ENCODE measurements at regions of chr15 and their contacts with region 1.

Region 1: GRCh38 chr15:84929744-84930371 is 45.4 kb downstream of the SLC28A1 start:
- DNase-seq: no peak
- ATAC-seq: no peak
- H3K4me3 Mint-ChIP-seq: no peak overlapping the region
- H3K27ac Mint-ChIP-seq: no peak overlapping the region
- H3K4me1 Mint-ChIP-seq: peaks cover 7% of the 10 kb centered on the region
- H3K27me3 Mint-ChIP-seq: no peaks in the 10 kb centered on the region
- CTCF ChIP-seq: no peak

Region 2: DNA sequence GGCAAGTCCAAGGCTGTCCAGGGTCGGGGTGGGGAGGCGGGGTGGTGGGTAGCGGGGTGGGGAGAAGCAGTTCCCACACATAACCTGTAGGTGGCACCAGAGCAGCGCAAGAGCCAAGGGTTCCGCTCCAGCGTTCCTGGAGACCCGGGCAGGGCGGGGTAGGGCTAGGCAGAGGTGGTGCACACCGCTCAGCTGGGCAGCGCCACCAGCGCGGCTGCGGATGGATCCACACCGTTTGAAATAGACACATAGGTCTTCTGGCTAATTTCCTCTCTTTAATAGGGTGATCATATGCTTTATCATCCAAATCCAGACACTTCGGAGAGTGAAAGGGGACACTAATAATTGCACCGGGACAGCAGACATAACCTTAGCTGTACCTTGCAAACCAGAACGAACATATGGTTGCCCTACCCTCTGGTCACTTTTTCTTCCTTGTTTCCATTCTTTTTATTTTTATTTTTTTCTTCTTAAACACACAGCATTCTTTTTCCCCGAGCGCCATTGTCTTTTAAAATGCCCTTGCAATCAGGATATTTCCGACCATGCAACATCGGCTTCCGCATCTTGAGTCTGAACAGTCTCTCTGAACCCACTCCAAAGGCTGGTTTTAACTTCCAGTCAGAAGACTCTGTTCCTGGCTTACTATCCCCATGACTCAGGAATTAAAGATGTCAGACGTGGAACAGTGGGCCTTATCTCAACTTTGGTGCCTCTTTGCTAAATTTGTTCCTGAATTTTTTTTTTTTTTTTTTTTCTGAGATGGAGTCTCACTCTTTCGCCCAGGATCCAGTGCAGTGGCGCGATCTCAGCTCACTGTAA is 341.6 kb before region 1 on chr15:
- CTCF ChIA-PET with region 1: interaction called, 15 read pairs
- POLR2A ChIA-PET with region 1: interaction called, 3 read pairs
- DNase-seq: peak; percentile 94
- ATAC-seq: peak; percentile 99
- H3K4me3 Mint-ChIP-seq: peak overlapping the region; percentile 66
- H3K27ac Mint-ChIP-seq: no peak overlapping the region
- H3K4me1 Mint-ChIP-seq: peaks cover 22% of the 10 kb centered on the region
- H3K27me3 Mint-ChIP-seq: peaks cover 19% of the 10 kb centered on the region
- CTCF ChIP-seq: peak; percentile 93

Region 3: GRCh38 chr15:84844964-84845363 is 84.9 kb before region 1 on chr15:
- CTCF ChIA-PET with region 1: interaction called, 11 read pairs
- POLR2A ChIA-PET with region 1: no interaction called
- DNase-seq: no peak
- ATAC-seq: no peak
- H3K4me3 Mint-ChIP-seq: no peak overlapping the region
- H3K27ac Mint-ChIP-seq: no peak overlapping the region
- H3K4me1 Mint-ChIP-seq: no peaks in the 10 kb centered on the region
- H3K27me3 Mint-ChIP-seq: no peaks in the 10 kb centered on the region
- CTCF ChIP-seq: no peak

Region 4: DNA sequence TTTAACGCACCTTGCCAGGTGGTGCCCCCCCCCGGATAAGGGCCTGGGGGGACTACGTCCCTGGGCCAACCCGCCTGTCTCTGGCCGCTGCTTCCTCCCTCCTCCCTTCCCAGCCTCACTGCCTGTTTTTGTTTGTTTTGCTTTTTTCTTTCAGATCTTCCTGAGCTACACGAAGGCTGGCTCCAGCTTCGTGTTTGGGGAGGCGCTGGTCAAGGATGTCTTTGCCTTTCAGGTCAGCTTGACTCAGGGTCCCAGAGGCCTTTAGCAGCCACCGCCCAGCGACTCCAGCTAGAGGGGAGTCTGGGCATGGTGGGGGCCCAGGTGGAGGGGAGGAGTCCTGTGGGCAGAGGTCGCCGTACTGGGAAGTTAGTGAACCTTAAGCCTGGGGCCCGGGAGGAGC is 21.3 kb before region 1 on chr15:
- CTCF ChIA-PET with region 1: interaction called, 10 read pairs
- POLR2A ChIA-PET with region 1: interaction called, 3 read pairs
- DNase-seq: no peak
- ATAC-seq: peak; percentile 64
- H3K4me3 Mint-ChIP-seq: no peak overlapping the region
- H3K27ac Mint-ChIP-seq: no peak overlapping the region
- H3K4me1 Mint-ChIP-seq: peaks cover 8% of the 10 kb centered on the region
- H3K27me3 Mint-ChIP-seq: no peaks in the 10 kb centered on the region
- CTCF ChIP-seq: no peak

Region 5: GRCh38 chr15:84967380-84967779 is 37.5 kb after region 1 on chr15:
- CTCF ChIA-PET with region 1: no interaction called
- POLR2A ChIA-PET with region 1: no interaction called
- DNase-seq: no peak
- ATAC-seq: no peak; the same call in 1 of the 2 replicates
- H3K4me3 Mint-ChIP-seq: no peak overlapping the region
- H3K27ac Mint-ChIP-seq: no peak overlapping the region
- H3K4me1 Mint-ChIP-seq: peaks cover 12% of the 10 kb centered on the region
- H3K27me3 Mint-ChIP-seq: peaks cover 6% of the 10 kb centered on the region
- CTCF ChIP-seq: no peak

Region 6: DNA sequence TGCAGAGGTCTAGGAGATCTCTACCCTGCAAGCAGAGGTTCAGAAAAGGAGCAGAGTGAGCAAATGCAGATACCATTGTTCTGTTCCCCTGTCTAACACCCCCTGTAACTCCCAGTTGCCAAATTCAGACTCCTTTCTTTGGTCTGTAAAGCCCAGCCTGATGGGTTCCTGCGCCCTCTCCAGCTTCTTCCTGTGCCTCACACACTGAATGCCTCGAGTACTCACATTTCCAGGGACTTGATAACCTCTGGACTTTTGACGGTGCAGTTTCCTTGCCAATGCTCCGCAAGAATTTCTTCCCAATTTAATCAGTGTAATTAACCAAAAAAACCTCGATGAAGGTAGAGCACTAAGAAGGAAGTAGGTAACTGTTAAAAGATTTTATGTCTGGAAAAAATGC is 71.1 kb after region 1 on chr15:
- CTCF ChIA-PET with region 1: no interaction called
- POLR2A ChIA-PET with region 1: no interaction called
- DNase-seq: no peak
- ATAC-seq: no peak
- H3K4me3 Mint-ChIP-seq: no peak overlapping the region
- H3K27ac Mint-ChIP-seq: no peak overlapping the region
- H3K4me1 Mint-ChIP-seq: peaks cover 7% of the 10 kb centered on the region; the same call in 1 of the 2 replicates
- H3K27me3 Mint-ChIP-seq: no peaks in the 10 kb centered on the region
- CTCF ChIP-seq: no peak

Region 7: DNA sequence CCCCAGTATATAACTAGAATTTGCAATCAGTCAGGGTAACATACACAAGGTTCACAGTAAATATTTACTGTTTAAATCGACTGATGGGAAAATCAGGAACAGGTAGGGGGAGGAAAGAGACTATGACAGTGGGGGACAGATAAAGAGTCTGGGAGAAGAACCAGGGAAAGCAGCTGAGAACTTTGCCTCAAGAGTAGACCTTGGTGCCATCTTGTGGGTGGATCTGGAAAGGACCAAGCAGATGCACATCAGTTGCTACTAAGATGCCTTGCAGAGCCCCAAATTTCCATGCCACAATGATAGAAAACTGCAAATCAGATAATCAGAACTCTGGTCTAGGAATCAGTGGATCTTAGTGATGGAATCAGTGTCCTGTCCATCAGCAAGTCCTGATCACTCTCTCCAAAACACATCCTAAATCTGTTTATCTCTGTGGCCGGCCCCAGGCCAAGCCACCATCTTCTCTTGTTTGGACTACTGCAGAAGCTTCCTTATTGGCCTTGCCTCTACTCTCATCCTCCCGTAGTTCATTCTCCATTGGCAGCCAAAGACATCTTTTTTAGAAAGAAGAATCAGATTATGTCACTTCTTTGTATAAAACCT is 114.5 kb after region 1 on chr15:
- CTCF ChIA-PET with region 1: interaction called, 19 read pairs
- POLR2A ChIA-PET with region 1: no interaction called
- DNase-seq: peak; percentile 64
- ATAC-seq: peak; percentile 94
- H3K4me3 Mint-ChIP-seq: no peak overlapping the region
- H3K27ac Mint-ChIP-seq: no peak overlapping the region
- H3K4me1 Mint-ChIP-seq: peaks cover 14% of the 10 kb centered on the region; the same call in 1 of the 2 replicates
- H3K27me3 Mint-ChIP-seq: no peaks in the 10 kb centered on the region
- CTCF ChIP-seq: no peak

Measured in WTC11 (cell line).